Caco-2 (cell line): ENCODE measurements at regions of chr10 and their contacts with region 1.

Region 1: GRCh38 chr10:70430493-70431445 is 10.7 kb downstream of the NODAL start:
- DNase-seq: peak; percentile 76 to 86
- H3K4me3 ChIP-seq: no peak overlapping the region
- H3K4me3 Mint-ChIP-seq: no peak overlapping the region
- H3K27ac Mint-ChIP-seq: no peak overlapping the region
- H3K4me1 ChIP-seq: peaks cover 28% of the 10 kb centered on the region
- H3K4me1 Mint-ChIP-seq: peaks cover 4% of the 10 kb centered on the region
- H3K27me3 ChIP-seq: no peaks in the 10 kb centered on the region
- H3K27me3 Mint-ChIP-seq: no peaks in the 10 kb centered on the region
- CTCF ChIP-seq: peak in 1 of 2 experiments; percentile 66

Region 2: DNA sequence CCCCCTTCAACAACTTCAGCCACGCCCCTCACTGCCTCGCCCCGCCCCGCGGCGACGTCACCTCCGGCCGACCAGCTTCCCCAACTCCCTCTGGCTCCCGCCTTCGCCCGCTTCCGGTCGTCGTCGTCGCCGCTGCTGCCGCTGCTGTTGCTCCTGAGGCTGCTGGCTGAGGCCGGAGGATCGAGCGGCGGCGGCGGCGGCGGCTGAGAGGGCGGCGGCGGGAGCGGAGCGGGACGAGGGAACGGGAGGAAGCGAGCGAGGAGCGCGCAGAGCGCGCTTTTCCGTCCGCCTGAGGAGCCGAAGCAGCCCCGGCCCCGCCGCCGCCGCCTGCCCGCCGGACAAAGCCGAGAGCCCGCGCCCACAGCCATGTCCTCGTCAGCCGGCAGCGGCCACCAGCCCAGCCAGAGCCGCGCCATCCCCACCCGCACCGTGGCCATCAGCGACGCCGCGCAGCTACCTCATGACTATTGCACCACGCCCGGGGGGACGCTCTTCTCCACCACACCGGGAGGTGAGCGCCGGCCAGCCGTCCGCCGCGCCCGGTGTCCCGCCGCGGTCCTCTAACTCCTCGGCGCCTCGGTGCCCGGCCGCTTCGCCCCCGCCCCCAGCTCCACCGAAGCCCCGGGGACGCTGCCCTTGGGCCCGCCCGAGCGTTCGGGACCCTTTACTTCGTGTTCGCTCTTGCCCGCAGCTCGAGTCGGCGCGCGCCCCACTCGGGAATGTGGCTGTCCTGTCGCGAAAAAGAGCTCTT is 26.6 kb before region 1 on chr10 and contains the start of gene EIF4EBP2:
- CTCF ChIA-PET with region 1: interaction called, 8 read pairs
- POLR2A ChIA-PET with region 1: interaction called, 39 read pairs
- intact Hi-C with region 1: no loop called
- DNase-seq: peak; percentile 99 to 100
- H3K4me3 ChIP-seq: peak within 1 kb of the TSS; percentile 99
- H3K4me3 Mint-ChIP-seq: peak within 1 kb of the TSS; percentile 95
- H3K27ac Mint-ChIP-seq: peak within 1 kb of the TSS; percentile 91
- H3K4me1 ChIP-seq: peaks cover 15% of the 10 kb centered on the region
- H3K4me1 Mint-ChIP-seq: peaks cover 47% of the 10 kb centered on the region
- H3K27me3 ChIP-seq: no peaks in the 10 kb centered on the region
- H3K27me3 Mint-ChIP-seq: no peaks in the 10 kb centered on the region
- CTCF ChIP-seq: no peak
- total RNA-seq, gene EIF4EBP2: 166 and 168 TPM in 2 replicates

Region 3: DNA sequence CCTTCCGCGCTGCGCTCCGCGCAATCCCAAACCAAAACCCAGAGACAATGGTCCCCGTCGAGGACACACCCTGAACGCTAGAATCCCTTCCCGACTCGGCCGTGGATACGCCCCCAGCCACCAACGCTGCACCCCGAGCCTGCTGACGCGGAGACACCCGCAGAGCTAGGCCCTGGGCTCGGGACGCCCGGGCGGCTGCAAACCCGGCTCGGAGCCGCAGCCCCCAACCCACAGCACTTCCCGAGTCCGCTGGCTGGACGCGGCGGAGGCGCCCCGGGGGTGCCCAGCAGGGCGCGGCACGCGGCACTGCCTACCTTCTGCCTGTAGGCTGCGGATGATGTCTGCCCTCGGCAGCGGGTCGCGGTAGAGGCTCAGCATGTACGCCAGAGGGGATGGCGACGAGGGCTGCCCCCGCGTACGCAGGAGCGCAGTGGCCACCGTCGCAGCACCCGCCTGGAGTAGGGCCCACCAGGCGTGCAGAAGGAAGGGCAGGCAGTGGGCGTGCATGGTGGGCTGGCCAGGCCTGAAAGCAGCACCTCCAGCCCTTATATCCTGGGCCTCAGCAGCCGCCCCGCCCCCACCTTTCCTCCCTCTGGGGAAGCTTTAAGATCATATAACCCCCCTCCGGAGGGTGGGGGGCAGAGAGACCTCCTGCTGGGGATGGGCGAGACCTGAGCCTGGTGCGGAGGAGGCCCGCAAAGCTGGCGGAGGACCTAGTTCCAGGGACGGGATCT is 10.6 kb after region 1 on chr10 and contains the start of gene NODAL:
- CTCF ChIA-PET with region 1: interaction called, 17 read pairs
- POLR2A ChIA-PET with region 1: interaction called, 5 read pairs
- intact Hi-C with region 1: loop called (anchors 1 kb)
- DNase-seq: no peak
- H3K4me3 ChIP-seq: no peak within 1 kb of the TSS
- H3K4me3 Mint-ChIP-seq: peak within 1 kb of the TSS; percentile 12
- H3K27ac Mint-ChIP-seq: peak within 1 kb of the TSS; percentile 74
- H3K4me1 ChIP-seq: peaks cover 48% of the 10 kb centered on the region
- H3K4me1 Mint-ChIP-seq: peaks cover 34% of the 10 kb centered on the region
- H3K27me3 ChIP-seq: no peaks in the 10 kb centered on the region
- H3K27me3 Mint-ChIP-seq: no peaks in the 10 kb centered on the region
- CTCF ChIP-seq: no peak
- total RNA-seq, gene NODAL: 0.59 and 1.3 TPM in 2 replicates

Region 4: GRCh38 chr10:70455213-70455630 is 24.5 kb after region 1 on chr10:
- CTCF ChIA-PET with region 1: interaction called, 16 read pairs
- POLR2A ChIA-PET with region 1: no interaction called
- intact Hi-C with region 1: no loop called
- DNase-seq: peak; percentile 84 to 89
- H3K4me3 ChIP-seq: no peak overlapping the region
- H3K4me3 Mint-ChIP-seq: no peak overlapping the region
- H3K27ac Mint-ChIP-seq: peak overlapping the region; percentile 7
- H3K4me1 ChIP-seq: peaks cover 14% of the 10 kb centered on the region
- H3K4me1 Mint-ChIP-seq: peaks cover 28% of the 10 kb centered on the region
- H3K27me3 ChIP-seq: no peaks in the 10 kb centered on the region
- H3K27me3 Mint-ChIP-seq: no peaks in the 10 kb centered on the region
- CTCF ChIP-seq: no peak

Region 5: DNA sequence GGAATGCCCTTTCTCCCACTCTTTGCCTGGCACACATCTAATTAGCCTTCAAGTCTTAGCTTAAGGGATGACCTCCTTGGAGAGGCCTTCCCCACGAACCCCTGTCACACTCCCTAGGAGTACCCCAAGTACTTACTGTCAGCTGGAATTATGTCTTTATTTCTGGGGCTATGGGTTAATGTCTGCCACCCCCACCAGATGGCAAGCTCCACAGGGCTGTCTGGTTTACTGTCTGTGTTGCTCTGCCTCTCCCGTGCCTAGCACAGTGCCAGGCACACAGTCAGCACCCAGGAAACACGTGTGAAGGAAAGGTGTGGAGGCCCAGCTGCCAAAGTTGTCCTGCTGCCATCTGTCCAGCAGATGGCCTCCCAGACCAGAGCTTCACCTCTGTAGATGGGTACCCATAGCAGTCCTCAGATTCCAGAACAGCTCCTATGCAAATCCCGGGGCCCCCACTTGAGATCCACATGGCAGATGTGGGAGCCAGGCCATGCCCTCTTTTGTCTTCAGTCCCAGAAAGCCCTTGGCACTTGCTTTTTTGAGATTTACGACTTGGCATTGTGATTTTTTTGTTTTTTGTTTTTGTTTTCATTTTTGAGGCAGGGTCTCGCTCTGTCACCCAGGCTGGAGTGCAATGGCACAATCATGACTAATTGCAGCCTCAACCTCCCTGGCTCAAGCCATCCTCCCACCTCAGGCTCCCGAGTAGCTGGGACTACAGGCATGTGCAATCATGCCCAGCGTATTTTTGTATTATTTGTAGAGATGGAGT is 30.6 kb after region 1 on chr10:
- CTCF ChIA-PET with region 1: interaction called, 25 read pairs
- POLR2A ChIA-PET with region 1: no interaction called
- intact Hi-C with region 1: loop called (anchors 1 kb)
- DNase-seq: peak; percentile 76 to 81
- H3K4me3 ChIP-seq: no peak overlapping the region
- H3K4me3 Mint-ChIP-seq: no peak overlapping the region
- H3K27ac Mint-ChIP-seq: no peak overlapping the region
- H3K4me1 ChIP-seq: no peaks in the 10 kb centered on the region; the same call in 1 of the 2 replicates
- H3K4me1 Mint-ChIP-seq: peaks cover 14% of the 10 kb centered on the region
- H3K27me3 ChIP-seq: no peaks in the 10 kb centered on the region
- H3K27me3 Mint-ChIP-seq: no peaks in the 10 kb centered on the region
- CTCF ChIP-seq: peak; percentile 97 to 99

Region 6: GRCh38 chr10:70540089-70540788 is 109.5 kb after region 1 on chr10:
- CTCF ChIA-PET with region 1: interaction called, 16 read pairs
- POLR2A ChIA-PET with region 1: no interaction called
- intact Hi-C with region 1: loop called (anchors 1 kb)
- DNase-seq: peak in 1 of 2 experiments; percentile 67
- H3K4me3 ChIP-seq: no peak overlapping the region
- H3K4me3 Mint-ChIP-seq: no peak overlapping the region
- H3K27ac Mint-ChIP-seq: no peak overlapping the region
- H3K4me1 ChIP-seq: no peaks in the 10 kb centered on the region
- H3K4me1 Mint-ChIP-seq: no peaks in the 10 kb centered on the region
- H3K27me3 ChIP-seq: no peaks in the 10 kb centered on the region
- H3K27me3 Mint-ChIP-seq: no peaks in the 10 kb centered on the region
- CTCF ChIP-seq: peak; percentile 86 to 94

Region 7: DNA sequence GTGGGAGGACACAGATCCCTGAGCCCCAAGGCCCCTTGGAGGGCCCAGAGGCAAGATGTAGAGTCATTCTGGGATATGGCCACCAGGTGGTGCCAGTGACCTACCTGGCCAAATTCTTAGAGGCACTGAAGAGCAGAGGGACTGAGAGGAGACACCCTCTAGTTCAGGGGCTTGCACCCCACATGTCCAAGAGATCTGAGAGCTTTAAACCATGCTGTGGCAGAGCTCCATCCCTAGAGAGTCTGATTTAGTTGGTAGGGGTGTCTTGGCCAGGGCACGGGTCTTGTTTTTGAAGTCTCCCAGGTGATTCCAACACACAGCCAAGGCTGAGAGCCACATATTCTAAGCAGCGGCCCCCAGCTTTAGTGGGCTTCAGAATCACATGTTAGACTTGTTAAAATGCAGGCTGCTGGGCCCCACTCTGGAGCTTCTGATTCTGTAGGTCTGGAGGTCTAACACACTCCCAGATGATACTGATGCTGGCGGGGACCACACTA is 119.2 kb after region 1 on chr10:
- CTCF ChIA-PET with region 1: interaction called, 3 read pairs
- POLR2A ChIA-PET with region 1: no interaction called
- intact Hi-C with region 1: loop called (anchors 2 kb)
- DNase-seq: peak; percentile 78 to 88
- H3K4me3 ChIP-seq: no peak overlapping the region
- H3K4me3 Mint-ChIP-seq: no peak overlapping the region
- H3K27ac Mint-ChIP-seq: no peak overlapping the region
- H3K4me1 ChIP-seq: peaks cover 5% of the 10 kb centered on the region; the same call in 1 of the 2 replicates
- H3K4me1 Mint-ChIP-seq: peaks cover 16% of the 10 kb centered on the region
- H3K27me3 ChIP-seq: no peaks in the 10 kb centered on the region
- H3K27me3 Mint-ChIP-seq: no peaks in the 10 kb centered on the region
- CTCF ChIP-seq: peak; percentile 99 to 100